ENCODE measurements at regions of chr12 and their contacts with region 1.

Region 1: DNA sequence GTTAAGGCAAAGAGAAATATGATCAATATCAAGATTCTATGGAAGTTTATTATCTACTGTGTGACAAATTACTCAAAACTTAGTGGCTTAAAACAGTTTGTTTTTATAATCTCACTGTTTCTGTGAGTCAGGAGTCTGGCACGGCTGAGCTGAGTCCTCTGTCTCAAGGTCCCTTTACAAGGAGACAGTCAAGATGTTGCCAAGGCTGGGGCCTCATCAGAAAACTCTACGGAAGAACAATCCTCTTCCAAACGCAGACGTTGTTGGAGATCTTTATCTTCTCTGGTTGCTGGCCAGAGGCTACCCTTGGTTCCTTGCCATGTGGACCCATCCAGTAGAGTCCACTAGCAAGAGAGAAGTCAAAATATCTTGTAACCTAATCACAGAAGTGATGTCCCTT is 100.6 kb upstream of the CCND2 start:
- DNase-seq: peak; percentile 26
- ATAC-seq: peak; percentile 79
- H3K4me3 ChIP-seq: no peak overlapping the region
- H3K27ac ChIP-seq: no peak overlapping the region
- H3K4me1 ChIP-seq: no peaks in the 10 kb centered on the region
- H3K27me3 ChIP-seq: peaks cover 2% of the 10 kb centered on the region; the same call in 1 of the 2 replicates
- CTCF ChIP-seq: no peak
- POLR2A ChIP-seq: no peak
- RAD21 ChIP-seq: no peak

Region 2: GRCh38 chr12:4118017-4118510 is 54.9 kb before region 1 on chr12:
- CTCF ChIA-PET with region 1: no interaction called
- POLR2A ChIA-PET with region 1: no interaction called
- dilution Hi-C with region 1: no loop called
- in situ Hi-C with region 1: no loop called
- intact Hi-C with region 1: loop called (anchors 2 kb)
- DNase-seq: peak; percentile 64
- ATAC-seq: peak; percentile 35
- H3K4me3 ChIP-seq: no peak overlapping the region
- H3K27ac ChIP-seq: no peak overlapping the region
- H3K4me1 ChIP-seq: peaks cover 17% of the 10 kb centered on the region
- H3K27me3 ChIP-seq: peaks cover 6% of the 10 kb centered on the region
- CTCF ChIP-seq: no peak
- POLR2A ChIP-seq: no peak
- RAD21 ChIP-seq: no peak